ENCODE measurements at regions of chr20 and their contacts with region 1.

Region 1: GRCh38 chr20:21901470-21902275 is 196.2 kb downstream of the PAX1 start:
- DNase-seq: peak in 4 of 5 donors; percentile 27 to 72 (median 36)
- ATAC-seq: peak in 2 of 4 donors; percentile 73 to 79
- H3K4me3 ChIP-seq: no peak overlapping the region
- H3K27ac ChIP-seq: peak overlapping the region in 2 of 12 donors; percentile 21 to 30
- H3K4me1 ChIP-seq: peaks cover 0 to 4% (median 0%) of the 10 kb centered on the region in 12 donors
- H3K27me3 ChIP-seq: no peaks in the 10 kb centered on the region
- CTCF ChIP-seq: no peak
- POLR2A ChIP-seq: no peak

Region 2: DNA sequence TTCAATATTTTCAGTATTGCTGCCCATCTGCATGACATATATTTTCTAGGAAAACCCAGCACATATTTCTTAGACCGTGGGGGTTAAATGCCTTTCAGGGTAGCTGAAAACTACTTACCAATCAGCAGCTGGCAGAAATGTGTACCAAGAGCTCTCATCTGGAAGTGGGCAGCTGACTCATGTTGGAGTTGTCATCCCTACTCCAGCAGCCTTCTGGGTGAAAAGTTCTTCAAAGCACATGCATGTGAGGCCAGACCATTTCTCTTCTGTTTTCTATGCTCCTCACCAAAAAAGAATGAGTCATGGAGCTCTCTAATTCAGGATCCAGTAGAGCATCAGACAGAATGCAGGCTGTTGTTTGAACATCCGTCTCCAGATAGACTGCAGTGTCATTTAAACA is 60.7 kb before region 1 on chr20:
- intact Hi-C with region 1: loop called in 1 of 10 experiments (anchors 10 kb)
- DNase-seq: no peak
- ATAC-seq: no peak
- H3K4me3 ChIP-seq: no peak overlapping the region
- H3K27ac ChIP-seq: no peak overlapping the region
- H3K4me1 ChIP-seq: no peaks in the 10 kb centered on the region
- H3K27me3 ChIP-seq: peaks cover 0 to 10% (median 0%) of the 10 kb centered on the region in 9 donors
- CTCF ChIP-seq: no peak
- POLR2A ChIP-seq: no peak

Measured in heart left ventricle (tissue), 16 donors.